ENCODE measurements at regions of chr5 and their contacts with region 1.

Region 1: GRCh38 chr5:34838785-34839714 is at the start of gene TTC23L:
- DNase-seq: peak; percentile 79 to 97 (median 89)
- ATAC-seq: peak; percentile 90 to 94
- H3K4me3 Mint-ChIP-seq: peak within 1 kb of the TSS; percentile 87 to 98 (median 95)
- H3K27ac Mint-ChIP-seq: peak within 1 kb of the TSS; percentile 91 to 99 (median 97)
- H3K4me1 Mint-ChIP-seq: peaks cover 3 to 19% (median 16%) of the 10 kb centered on the region in 4 donors
- H3K27me3 Mint-ChIP-seq: peaks cover 0 to 5% (median 3%) of the 10 kb centered on the region in 5 donors
- polyA plus RNA-seq, gene TTC23L: not detected

Region 2: DNA sequence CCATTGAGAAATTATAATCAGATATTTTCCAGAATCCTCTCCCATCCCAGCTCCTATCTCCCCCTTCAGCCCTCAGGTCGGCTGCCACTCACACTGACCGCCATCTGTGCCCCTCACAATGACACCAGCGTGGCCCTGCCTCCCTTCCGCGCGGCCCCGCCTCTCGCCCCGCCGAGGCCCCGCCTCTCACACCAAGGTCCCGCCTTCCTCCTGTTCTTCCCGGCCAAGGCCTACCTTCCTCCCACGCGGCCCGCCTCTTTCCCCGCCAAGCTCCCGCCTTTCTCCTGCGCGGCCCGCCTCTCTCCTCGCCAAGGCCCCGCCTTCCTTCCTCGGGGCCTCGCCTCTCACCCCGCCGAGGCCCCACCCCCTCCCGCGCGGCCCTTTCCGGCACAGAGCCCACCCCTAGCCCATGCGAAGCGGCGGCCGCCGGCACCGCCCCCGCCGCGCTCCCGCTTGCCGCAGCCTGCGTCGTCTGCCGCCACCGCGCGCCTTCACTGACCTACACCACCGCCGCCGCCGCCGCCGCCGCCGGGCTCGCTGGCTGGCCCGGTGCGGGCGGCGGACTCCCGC is 90.2 kb after region 1 on chr5 and contains the start of gene DNAJC21:
- POLR2A ChIA-PET with region 1: interaction called, 15 read pairs
- DNase-seq: peak; percentile 92 to 98 (median 97)
- ATAC-seq: peak; percentile 84 to 87
- H3K4me3 Mint-ChIP-seq: peak within 1 kb of the TSS; percentile 94 to 98 (median 97)
- H3K27ac Mint-ChIP-seq: peak within 1 kb of the TSS; percentile 76 to 98 (median 96)
- H3K4me1 Mint-ChIP-seq: peaks cover 21 to 40% (median 35%) of the 10 kb centered on the region in 4 donors
- H3K27me3 Mint-ChIP-seq: no peaks in the 10 kb centered on the region
- polyA plus RNA-seq, gene DNAJC21: 14.6 to 27.6 (median 21.8) TPM

Region 3: GRCh38 chr5:34957857-34958690 is 119.0 kb after region 1 on chr5:
- POLR2A ChIA-PET with region 1: no interaction called
- DNase-seq: peak in 1 of 10 donors; percentile 7
- ATAC-seq: peak; percentile 52 to 53
- H3K4me3 Mint-ChIP-seq: no peak overlapping the region
- H3K27ac Mint-ChIP-seq: peak overlapping the region in 6 of 10 donors; percentile 27 to 69 (median 36)
- H3K4me1 Mint-ChIP-seq: peaks cover 0 to 8% (median 0%) of the 10 kb centered on the region in 4 donors
- H3K27me3 Mint-ChIP-seq: no peaks in the 10 kb centered on the region